CD4-positive, alpha-beta memory T cell (primary cell): ENCODE measurements at regions of chr19 and their contacts with region 1.

Region 1: GRCh38 chr19:18919086-18919899 is at the starts of genes COPE and DDX49:
- DNase-seq: peak; percentile 97 to 100 (median 99)
- H3K4me3 ChIP-seq: peak within 1 kb of the TSS; percentile 92 to 93
- H3K4me3 Mint-ChIP-seq: peak within 1 kb of the TSS; percentile 72 to 97 (median 93)
- H3K27ac ChIP-seq: peak within 1 kb of the TSS; percentile 94
- H3K27ac Mint-ChIP-seq: peak within 1 kb of the TSS; percentile 73 to 98 (median 96)
- H3K4me1 ChIP-seq: peaks cover 45% of the 10 kb centered on the region
- H3K4me1 Mint-ChIP-seq: peaks cover 21 to 64% (median 35%) of the 10 kb centered on the region in 4 donors
- H3K27me3 ChIP-seq: no peaks in the 10 kb centered on the region
- H3K27me3 Mint-ChIP-seq: no peaks in the 10 kb centered on the region
- total RNA-seq, gene COPE: 165 to 170 TPM
- total RNA-seq, gene DDX49: 40.9 to 43.6 TPM

Region 2: GRCh38 chr19:17555480-17555928 is 1363.8 kb before region 1 on chr19 and contains the start of gene COLGALT1:
- CTCF ChIA-PET with region 1: no interaction called
- POLR2A ChIA-PET with region 1: no interaction called
- intact Hi-C with region 1: loop called (anchors 5 kb)
- DNase-seq: peak; percentile 94 to 98 (median 95)
- H3K4me3 ChIP-seq: peak within 1 kb of the TSS; percentile 54 to 80
- H3K4me3 Mint-ChIP-seq: peak within 1 kb of the TSS; percentile 83 to 89 (median 86)
- H3K27ac ChIP-seq: peak within 1 kb of the TSS; percentile 62
- H3K27ac Mint-ChIP-seq: peak within 1 kb of the TSS in 6 of 7 donors; percentile 63 to 92 (median 76)
- H3K4me1 ChIP-seq: peaks cover 18% of the 10 kb centered on the region
- H3K4me1 Mint-ChIP-seq: peaks cover 8 to 25% (median 14%) of the 10 kb centered on the region in 4 donors
- H3K27me3 ChIP-seq: no peaks in the 10 kb centered on the region
- H3K27me3 Mint-ChIP-seq: no peaks in the 10 kb centered on the region
- total RNA-seq, gene COLGALT1: 68.3 to 74.7 TPM

Region 3: DNA sequence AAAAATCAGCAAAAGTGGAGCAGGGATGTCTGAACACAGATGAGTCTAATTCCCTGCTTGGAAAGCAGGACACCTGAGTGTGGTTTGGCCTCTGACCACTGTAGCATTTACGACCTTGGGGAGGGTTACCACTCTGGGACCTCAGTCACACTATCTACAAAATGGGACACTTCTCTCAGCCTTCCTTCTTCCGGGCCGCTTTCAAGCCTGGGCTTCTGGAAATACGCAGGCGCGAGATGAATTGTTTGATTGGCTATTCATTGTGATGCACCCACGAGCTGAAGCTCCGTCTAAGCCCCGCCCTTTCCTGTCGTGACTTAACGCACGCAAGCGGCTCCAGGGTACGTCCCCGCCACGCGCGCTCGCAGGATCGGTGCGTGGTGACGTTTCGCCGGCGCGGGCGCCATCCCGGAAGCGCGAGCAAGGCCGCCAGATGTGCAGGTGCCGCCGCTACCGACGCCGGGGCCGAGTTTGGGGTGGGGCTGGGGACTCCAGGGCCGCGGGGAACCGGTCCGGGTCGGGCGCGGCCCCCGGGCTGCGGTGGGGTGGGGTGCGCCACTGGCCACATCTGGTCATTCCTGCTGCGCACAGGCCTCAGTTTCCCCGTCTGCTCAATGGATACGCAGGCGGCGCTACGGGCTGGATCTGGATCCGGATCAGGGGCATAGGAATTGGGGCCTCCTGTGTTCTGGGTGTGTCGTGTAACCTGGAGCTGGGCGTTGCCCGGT is 361.7 kb before region 1 on chr19 and contains the start of gene KXD1:
- CTCF ChIA-PET with region 1: no interaction called
- POLR2A ChIA-PET with region 1: interaction called, 11 read pairs
- intact Hi-C with region 1: no loop called
- DNase-seq: peak; percentile 95 to 100 (median 99)
- H3K4me3 ChIP-seq: peak within 1 kb of the TSS; percentile 81 to 97
- H3K4me3 Mint-ChIP-seq: peak within 1 kb of the TSS; percentile 86 to 97 (median 93)
- H3K27ac ChIP-seq: peak within 1 kb of the TSS; percentile 98
- H3K27ac Mint-ChIP-seq: peak within 1 kb of the TSS; percentile 94 to 98 (median 96)
- H3K4me1 ChIP-seq: peaks cover 25% of the 10 kb centered on the region
- H3K4me1 Mint-ChIP-seq: peaks cover 9 to 35% (median 17%) of the 10 kb centered on the region in 4 donors
- H3K27me3 ChIP-seq: no peaks in the 10 kb centered on the region
- H3K27me3 Mint-ChIP-seq: no peaks in the 10 kb centered on the region
- total RNA-seq, gene KXD1: 95.3 to 95.6 TPM

Region 4: GRCh38 chr19:18636183-18636968 is 282.9 kb before region 1 on chr19:
- CTCF ChIA-PET with region 1: no interaction called
- POLR2A ChIA-PET with region 1: interaction called, 3 read pairs
- intact Hi-C with region 1: loop called (anchors 1 kb)
- DNase-seq: peak; percentile 97 to 99 (median 99)
- H3K4me3 ChIP-seq: peak overlapping the region; percentile 47 to 82
- H3K4me3 Mint-ChIP-seq: peak overlapping the region; percentile 84 to 90 (median 88)
- H3K27ac ChIP-seq: peak overlapping the region; percentile 84
- H3K27ac Mint-ChIP-seq: peak overlapping the region; percentile 77 to 96 (median 94)
- H3K4me1 ChIP-seq: peaks cover 24% of the 10 kb centered on the region
- H3K4me1 Mint-ChIP-seq: peaks cover 20 to 45% (median 33%) of the 10 kb centered on the region in 4 donors
- H3K27me3 ChIP-seq: no peaks in the 10 kb centered on the region
- H3K27me3 Mint-ChIP-seq: peaks cover 0 to 2% of the 10 kb centered on the region in 2 donors

Region 5: GRCh38 chr19:18908917-18909619 is 10.2 kb before region 1 on chr19:
- CTCF ChIA-PET with region 1: no interaction called
- POLR2A ChIA-PET with region 1: interaction called, 10 read pairs
- intact Hi-C with region 1: no loop called
- DNase-seq: no peak
- H3K4me3 ChIP-seq: no peak overlapping the region
- H3K4me3 Mint-ChIP-seq: no peak overlapping the region
- H3K27ac ChIP-seq: no peak overlapping the region
- H3K27ac Mint-ChIP-seq: peak overlapping the region in 1 of 7 donors; percentile 18
- H3K4me1 ChIP-seq: peaks cover 7% of the 10 kb centered on the region
- H3K4me1 Mint-ChIP-seq: peaks cover 3 to 13% (median 4%) of the 10 kb centered on the region in 4 donors
- H3K27me3 ChIP-seq: no peaks in the 10 kb centered on the region
- H3K27me3 Mint-ChIP-seq: no peaks in the 10 kb centered on the region

Region 6: GRCh38 chr19:19063183-19064097 is 144.1 kb after region 1 on chr19 and contains the start of gene SLC25A42:
- CTCF ChIA-PET with region 1: no interaction called
- POLR2A ChIA-PET with region 1: interaction called, 12 read pairs
- intact Hi-C with region 1: no loop called
- DNase-seq: peak; percentile 99 to 100 (median 99)
- H3K4me3 ChIP-seq: peak within 1 kb of the TSS; percentile 83 to 85
- H3K4me3 Mint-ChIP-seq: peak within 1 kb of the TSS; percentile 84 to 95 (median 91)
- H3K27ac ChIP-seq: peak within 1 kb of the TSS; percentile 57
- H3K27ac Mint-ChIP-seq: peak within 1 kb of the TSS; percentile 82 to 93 (median 91)
- H3K4me1 ChIP-seq: peaks cover 38% of the 10 kb centered on the region
- H3K4me1 Mint-ChIP-seq: peaks cover 19 to 43% (median 28%) of the 10 kb centered on the region in 4 donors
- H3K27me3 ChIP-seq: no peaks in the 10 kb centered on the region
- H3K27me3 Mint-ChIP-seq: no peaks in the 10 kb centered on the region
- total RNA-seq, gene SLC25A42: 28.3 to 31.6 TPM